ENCODE measurements at regions of chr2 and their contacts with region 1.

Region 1: GRCh38 chr2:108583903-108584520 is 49.7 kb downstream of the LIMS1 start:
- DNase-seq: peak; percentile 66
- H3K4me3 ChIP-seq: no peak overlapping the region
- H3K27ac ChIP-seq: no peak overlapping the region
- H3K4me1 ChIP-seq: peaks cover 30% of the 10 kb centered on the region
- H3K27me3 ChIP-seq: no peaks in the 10 kb centered on the region
- CTCF ChIP-seq: peak; percentile 69 to 82

Region 2: DNA sequence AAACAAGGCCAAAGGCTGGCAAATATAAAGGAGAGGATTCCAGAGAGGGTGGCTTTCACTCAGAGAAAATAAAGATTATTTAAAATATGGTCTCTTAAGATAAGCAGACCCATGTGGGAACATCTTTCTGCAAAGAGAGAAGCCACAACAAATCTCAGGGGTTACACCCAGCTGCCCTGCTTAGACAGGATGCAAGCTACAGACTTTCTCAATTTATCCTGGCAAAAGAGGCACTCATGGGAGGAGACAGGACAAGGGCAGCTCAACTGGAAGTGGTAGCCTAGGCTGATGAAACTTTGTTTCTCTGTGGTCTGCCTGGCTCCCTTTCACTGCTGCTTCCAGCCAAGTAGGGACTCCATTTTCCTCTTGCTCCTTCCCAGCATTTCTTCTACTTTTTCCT is 232.1 kb before region 1 on chr2:
- CTCF ChIA-PET with region 1: no interaction called
- dilution Hi-C with region 1: no loop called
- in situ Hi-C with region 1: loop called in 1 of 2 experiments (anchors 10 kb)
- intact Hi-C with region 1: loop called (anchors 1 kb)
- DNase-seq: no peak
- H3K4me3 ChIP-seq: no peak overlapping the region
- H3K27ac ChIP-seq: no peak overlapping the region
- H3K4me1 ChIP-seq: no peaks in the 10 kb centered on the region
- H3K27me3 ChIP-seq: no peaks in the 10 kb centered on the region
- CTCF ChIP-seq: no peak

Region 3: DNA sequence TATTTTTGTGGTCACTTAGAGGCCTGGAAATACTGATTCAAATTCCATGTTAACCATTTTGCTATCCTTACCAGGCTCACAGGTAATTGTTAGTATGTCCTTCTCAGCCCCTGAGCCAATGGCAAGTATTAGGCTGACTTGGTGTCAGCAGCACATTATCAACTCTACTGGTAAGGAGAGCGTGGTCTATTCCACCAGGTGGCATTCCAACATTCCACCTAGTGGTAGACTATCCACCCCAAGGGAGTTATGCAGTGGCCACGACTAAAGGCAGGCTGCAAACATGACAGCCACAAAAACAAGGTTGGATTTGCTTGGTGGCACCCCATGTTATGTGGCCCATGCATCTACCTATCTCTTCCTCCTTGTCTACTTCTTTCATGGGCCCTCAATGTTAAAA is 166.8 kb before region 1 on chr2:
- CTCF ChIA-PET with region 1: no interaction called
- dilution Hi-C with region 1: no loop called
- in situ Hi-C with region 1: no loop called
- intact Hi-C with region 1: loop called (anchors 1 kb)
- DNase-seq: no peak
- H3K4me3 ChIP-seq: no peak overlapping the region
- H3K27ac ChIP-seq: no peak overlapping the region
- H3K4me1 ChIP-seq: peaks cover 24% of the 10 kb centered on the region
- H3K27me3 ChIP-seq: no peaks in the 10 kb centered on the region
- CTCF ChIP-seq: peak; percentile 2 to 37

Region 4: GRCh38 chr2:108533832-108534583 is 50.0 kb before region 1 on chr2 and contains the start of gene LIMS1:
- CTCF ChIA-PET with region 1: no interaction called
- dilution Hi-C with region 1: no loop called
- in situ Hi-C with region 1: loop called in 1 of 2 experiments (anchors 5 kb)
- intact Hi-C with region 1: loop called (anchors 2 kb)
- DNase-seq: peak; percentile 85
- H3K4me3 ChIP-seq: peak within 1 kb of the TSS; percentile 67 to 98 (median 94)
- H3K27ac ChIP-seq: peak within 1 kb of the TSS; percentile 97
- H3K4me1 ChIP-seq: peaks cover 33% of the 10 kb centered on the region
- H3K27me3 ChIP-seq: no peaks in the 10 kb centered on the region
- CTCF ChIP-seq: no peak
- total RNA-seq, gene LIMS1: 60.1 to 108 TPM

Region 5: GRCh38 chr2:108637304-108637669 is 53.3 kb after region 1 on chr2:
- CTCF ChIA-PET with region 1: interaction called, 4 read pairs
- dilution Hi-C with region 1: no loop called
- in situ Hi-C with region 1: no loop called
- intact Hi-C with region 1: loop called (anchors 1 kb)
- DNase-seq: peak; percentile 86
- H3K4me3 ChIP-seq: no peak overlapping the region
- H3K27ac ChIP-seq: peak overlapping the region; percentile 37
- H3K4me1 ChIP-seq: peaks cover 33% of the 10 kb centered on the region
- H3K27me3 ChIP-seq: no peaks in the 10 kb centered on the region
- CTCF ChIP-seq: no peak

Measured in mammary epithelial cell (primary cell).